Right ventricle myocardium inferior (tissue), 1 donor: ENCODE measurements at regions of chr1 and their contacts with region 1.

Region 1: DNA sequence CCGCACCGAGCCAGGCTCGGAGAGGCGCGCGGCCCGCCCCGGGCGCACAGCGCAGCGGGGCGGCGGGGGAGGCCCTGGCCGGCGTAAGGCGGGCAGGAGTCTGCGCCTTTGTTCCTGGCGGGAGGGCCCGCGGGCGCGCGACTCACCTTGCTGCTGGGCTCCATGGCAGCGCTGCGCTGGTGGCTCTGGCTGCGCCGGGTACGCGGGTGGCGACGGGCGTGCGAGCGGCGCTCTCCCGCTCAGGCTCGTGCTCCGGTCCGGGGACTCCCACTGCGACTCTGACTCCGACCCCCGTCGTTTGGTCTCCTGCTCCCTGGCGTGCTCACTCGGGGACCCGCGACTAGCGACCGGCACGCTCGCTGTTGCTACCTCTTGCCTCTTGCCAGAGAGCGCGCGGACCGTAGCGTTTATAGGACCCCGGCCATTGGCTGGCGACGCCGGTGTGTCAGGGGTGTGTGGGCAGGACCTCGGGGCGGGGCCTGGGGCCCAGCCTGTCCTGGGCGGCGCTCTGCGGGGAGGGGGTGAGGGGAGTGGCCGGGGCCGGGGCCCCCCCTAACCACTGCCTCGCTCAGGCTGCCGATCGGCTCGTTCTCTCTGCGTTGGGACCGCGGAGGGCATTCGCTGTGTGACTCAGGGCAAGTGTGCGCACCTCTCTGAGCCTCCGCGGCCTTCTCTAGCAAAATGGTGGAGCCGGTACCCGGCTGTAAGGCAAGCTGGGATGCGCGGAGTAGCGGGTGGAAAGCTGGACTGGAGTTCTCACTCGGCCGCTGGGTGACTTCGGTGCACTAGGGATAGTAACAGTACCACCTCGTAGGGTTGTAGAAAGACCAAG is at the start of gene SLC2A1:
- DNase-seq: peak; percentile 94
- ATAC-seq: peak; percentile 95
- total RNA-seq, gene SLC2A1: 46.4 TPM

Region 2: GRCh38 chr1:42784946-42785693 is 173.6 kb before region 1 on chr1 and contains the start of gene TMEM269:
- intact Hi-C with region 1: no loop called
- DNase-seq: peak; percentile 68
- ATAC-seq: peak; percentile 38
- total RNA-seq, gene TMEM269: not detected

Region 3: GRCh38 chr1:42924082-42924850 is 34.4 kb before region 1 on chr1:
- intact Hi-C with region 1: loop called (anchors 5 kb)
- DNase-seq: peak; percentile 98
- ATAC-seq: peak; percentile 99

Region 4: GRCh38 chr1:42941640-42942330 is 16.9 kb before region 1 on chr1:
- intact Hi-C with region 1: loop called (anchors 2 kb)
- DNase-seq: peak; percentile 81
- ATAC-seq: peak; percentile 42

Region 5: GRCh38 chr1:43358121-43358745 is 399.5 kb after region 1 on chr1:
- intact Hi-C with region 1: no loop called
- DNase-seq: no peak
- ATAC-seq: peak; percentile 36